Endothelial cell of umbilical vein (primary cell): ENCODE measurements at regions of chr9 and their contacts with region 1.

Region 1: DNA sequence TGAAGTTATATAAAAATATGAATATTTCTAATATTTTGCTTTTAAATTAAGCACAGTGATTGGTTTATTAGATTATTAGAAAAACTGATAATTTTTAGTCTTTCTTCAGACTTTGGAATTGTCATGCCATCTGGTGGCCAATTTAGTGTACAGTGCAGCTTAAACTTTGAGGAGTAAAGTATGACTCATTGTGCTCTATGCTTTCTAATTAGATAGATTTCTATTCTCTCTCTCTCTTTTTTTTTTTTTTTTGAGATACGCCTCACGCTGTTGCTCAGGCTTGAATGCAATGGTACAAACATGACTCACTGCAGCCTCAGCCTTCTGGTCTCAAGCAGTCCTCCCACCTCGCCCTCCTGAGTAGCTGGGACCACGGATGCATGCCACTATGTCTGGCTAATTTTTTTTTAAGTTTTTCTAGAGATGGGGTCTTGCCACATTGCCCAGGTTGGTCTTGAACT is 42.1 kb upstream of the GPR21 start:
- DNase-seq: peak; percentile 92
- H3K4me3 ChIP-seq: no peak overlapping the region
- H3K27ac ChIP-seq: no peak overlapping the region
- H3K4me1 ChIP-seq: peaks cover 2% of the 10 kb centered on the region
- H3K27me3 ChIP-seq: no peaks in the 10 kb centered on the region
- CTCF ChIP-seq: peak; percentile 39 to 46
- POLR2A ChIP-seq: no peak

Region 2: DNA sequence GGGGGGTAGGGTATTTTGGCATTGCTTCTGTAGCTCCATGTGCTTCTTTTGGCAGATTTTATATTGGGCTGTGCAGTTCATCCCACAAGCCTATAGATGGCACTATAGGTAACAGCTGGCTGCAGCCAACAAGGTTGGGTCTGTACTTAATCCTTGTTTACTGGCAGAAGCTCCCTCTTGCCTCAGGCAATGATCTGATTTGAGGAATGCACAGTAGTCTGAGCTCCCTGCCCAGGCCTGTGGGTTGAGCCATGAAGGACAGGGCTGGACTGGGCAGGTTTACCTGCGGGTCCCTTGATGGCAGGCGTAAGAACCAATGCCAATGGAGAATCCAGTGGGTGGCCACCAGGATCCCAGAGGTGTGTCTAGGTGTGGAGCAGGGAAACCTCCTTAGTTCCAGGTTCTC is 492.5 kb before region 1 on chr9:
- CTCF ChIA-PET with region 1: interaction called, 11 read pairs
- POLR2A ChIA-PET with region 1: no interaction called
- dilution Hi-C with region 1: no loop called
- intact Hi-C with region 1: no loop called
- DNase-seq: peak; percentile 56
- H3K4me3 ChIP-seq: no peak overlapping the region
- H3K27ac ChIP-seq: no peak overlapping the region
- H3K4me1 ChIP-seq: no peaks in the 10 kb centered on the region
- H3K27me3 ChIP-seq: peaks cover 4 to 31% of the 10 kb centered on the region in 2 experiments
- CTCF ChIP-seq: peak; percentile 80 to 85
- POLR2A ChIP-seq: no peak

Region 3: DNA sequence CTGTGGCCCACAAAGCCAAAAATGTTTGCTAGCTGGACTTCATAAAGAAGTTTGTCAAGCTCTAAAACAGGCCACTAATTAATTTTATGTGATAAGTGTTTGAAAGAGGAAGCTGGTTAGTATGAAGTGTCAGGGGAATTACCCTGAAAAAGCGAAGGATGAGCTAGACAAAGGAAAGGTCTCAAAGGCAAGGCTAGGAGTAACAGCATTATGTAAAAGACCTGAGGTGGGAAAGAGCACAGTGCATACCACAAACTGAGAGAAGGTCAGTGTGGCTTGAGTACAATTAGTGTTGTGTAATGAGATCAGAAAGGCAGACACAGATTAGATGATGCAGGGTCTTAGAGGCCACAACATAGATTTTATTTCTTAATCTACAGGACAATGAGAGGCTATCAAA is 115.9 kb before region 1 on chr9:
- CTCF ChIA-PET with region 1: interaction called, 11 read pairs
- POLR2A ChIA-PET with region 1: no interaction called
- dilution Hi-C with region 1: no loop called
- intact Hi-C with region 1: no loop called
- DNase-seq: no peak
- H3K4me3 ChIP-seq: no peak overlapping the region
- H3K27ac ChIP-seq: no peak overlapping the region
- H3K4me1 ChIP-seq: no peaks in the 10 kb centered on the region
- H3K27me3 ChIP-seq: no peaks in the 10 kb centered on the region
- CTCF ChIP-seq: no peak
- POLR2A ChIP-seq: no peak

Region 4: GRCh38 chr9:122912964-122913673 is 78.3 kb before region 1 on chr9 and contains the start of gene ZBTB6:
- CTCF ChIA-PET with region 1: interaction called, 8 read pairs
- POLR2A ChIA-PET with region 1: no interaction called
- dilution Hi-C with region 1: no loop called
- intact Hi-C with region 1: loop called (anchors 2 kb)
- DNase-seq: peak; percentile 77
- H3K4me3 ChIP-seq: peak within 1 kb of the TSS; percentile 78 to 99 (median 93)
- H3K27ac ChIP-seq: peak within 1 kb of the TSS; percentile 60
- H3K4me1 ChIP-seq: peaks cover 12% of the 10 kb centered on the region
- H3K27me3 ChIP-seq: no peaks in the 10 kb centered on the region
- CTCF ChIP-seq: no peak
- POLR2A ChIP-seq: peak; percentile 64
- total RNA-seq, gene ZBTB6: 5.5 and 6.5 TPM in 2 replicates

Region 5: DNA sequence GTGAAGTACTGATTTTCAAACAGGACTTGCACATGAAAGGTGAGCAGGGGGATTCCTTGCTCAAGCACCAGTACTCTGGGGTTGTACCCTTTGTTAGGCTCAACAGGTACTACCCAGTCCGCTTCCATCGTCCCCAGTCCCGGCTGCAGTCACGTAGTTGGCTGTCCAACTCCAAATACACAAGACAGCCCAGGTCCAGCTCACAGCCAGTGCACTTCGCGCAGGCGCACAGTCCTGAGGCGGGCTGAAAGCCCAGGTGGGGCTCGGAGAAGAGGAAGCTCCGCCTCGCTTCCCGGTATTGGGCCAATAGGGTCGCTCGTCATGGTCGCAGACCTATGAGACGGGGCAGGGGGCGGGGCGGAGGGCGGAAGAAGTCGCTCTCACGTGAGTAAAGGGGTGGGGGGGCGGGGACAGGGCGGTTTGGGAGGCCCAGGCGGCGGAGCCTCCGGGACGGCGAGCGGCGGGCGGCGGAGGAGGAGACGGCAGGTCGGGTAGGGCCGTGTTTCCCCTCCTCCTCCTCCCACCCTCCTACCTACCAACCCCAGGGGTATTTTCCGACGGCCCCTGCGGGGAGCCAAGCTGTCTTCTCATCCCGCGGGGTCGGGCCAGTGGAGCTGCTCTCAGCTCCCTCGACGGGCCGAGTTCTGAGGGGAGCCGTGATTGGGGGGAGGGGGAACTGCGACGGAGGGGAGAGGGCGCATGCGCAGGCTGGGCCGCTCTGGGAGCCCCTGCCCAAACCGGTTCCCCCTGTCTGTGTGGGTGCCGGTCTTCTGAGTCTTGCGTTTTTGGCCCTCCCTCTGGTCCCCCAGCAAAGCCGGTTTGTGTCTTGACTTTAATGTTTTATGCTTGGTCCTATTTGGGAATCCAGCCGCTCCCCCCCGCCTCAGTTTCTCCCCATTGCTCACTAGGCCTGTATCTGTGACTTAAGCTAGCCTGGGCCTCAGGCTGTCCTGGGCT is 50.5 kb before region 1 on chr9 and contains the start of gene RABGAP1:
- CTCF ChIA-PET with region 1: interaction called, 12 read pairs
- POLR2A ChIA-PET with region 1: interaction called, 9 read pairs
- dilution Hi-C with region 1: no loop called
- intact Hi-C with region 1: no loop called
- DNase-seq: peak; percentile 98
- H3K4me3 ChIP-seq: peak within 1 kb of the TSS; percentile 78 to 96 (median 92)
- H3K27ac ChIP-seq: peak within 1 kb of the TSS; percentile 62
- H3K4me1 ChIP-seq: peaks cover 12% of the 10 kb centered on the region
- H3K27me3 ChIP-seq: no peaks in the 10 kb centered on the region
- CTCF ChIP-seq: no peak
- POLR2A ChIP-seq: peak; percentile 81
- total RNA-seq, gene RABGAP1: 43.1 and 53.6 TPM in 2 replicates

Region 6: DNA sequence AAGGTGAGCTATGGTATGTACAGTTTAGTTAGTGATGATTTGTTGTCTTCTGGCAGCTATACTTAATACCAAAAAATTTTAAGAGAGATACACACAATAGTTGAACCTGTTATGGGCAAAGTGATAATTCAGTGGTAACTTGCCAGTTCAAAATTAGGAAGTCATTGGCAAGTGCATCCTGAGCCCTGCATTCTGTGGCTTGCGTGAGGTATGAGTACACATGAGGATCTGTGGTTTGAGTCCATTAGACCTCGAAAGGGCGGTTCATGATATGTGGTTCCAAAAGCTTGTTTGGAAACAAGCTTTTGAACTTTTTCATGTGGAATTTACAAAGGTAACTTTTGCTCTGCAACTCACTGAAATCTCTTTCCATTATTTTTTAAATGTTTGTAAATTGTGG is 89.0 kb after region 1 on chr9:
- CTCF ChIA-PET with region 1: no interaction called
- POLR2A ChIA-PET with region 1: no interaction called
- dilution Hi-C with region 1: no loop called
- intact Hi-C with region 1: no loop called
- DNase-seq: no peak
- H3K4me3 ChIP-seq: no peak overlapping the region
- H3K27ac ChIP-seq: no peak overlapping the region
- H3K4me1 ChIP-seq: no peaks in the 10 kb centered on the region
- H3K27me3 ChIP-seq: no peaks in the 10 kb centered on the region
- CTCF ChIP-seq: no peak
- POLR2A ChIP-seq: no peak